A673 (cell line): ENCODE measurements at regions of chr10 and their contacts with region 1.

Region 1: DNA sequence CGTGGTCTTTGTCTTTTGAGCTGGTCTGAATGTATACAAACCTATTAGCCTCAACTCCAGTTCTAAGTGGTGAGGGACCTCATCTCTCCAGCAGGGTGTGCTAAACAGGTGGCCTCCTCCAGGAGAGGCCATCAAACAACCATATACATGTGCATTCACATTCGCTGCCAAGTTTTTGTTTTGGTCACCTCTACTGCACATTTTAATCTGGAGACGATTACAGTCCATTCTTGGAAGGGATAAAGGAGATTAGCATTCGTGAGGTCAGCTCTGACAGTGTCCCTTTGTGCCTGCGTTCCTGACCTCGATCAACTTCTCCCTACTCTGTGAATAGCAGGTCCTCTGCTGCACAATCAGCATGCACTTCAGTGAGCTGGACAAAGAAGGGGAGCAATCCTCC is 60.8 kb downstream of the RHOBTB1 start:
- DNase-seq: peak; percentile 42
- H3K4me3 ChIP-seq: no peak overlapping the region
- H3K27ac ChIP-seq: no peak overlapping the region
- H3K4me1 ChIP-seq: no peaks in the 10 kb centered on the region
- H3K27me3 ChIP-seq: no peaks in the 10 kb centered on the region
- CTCF ChIP-seq: peak; percentile 52

Region 2: DNA sequence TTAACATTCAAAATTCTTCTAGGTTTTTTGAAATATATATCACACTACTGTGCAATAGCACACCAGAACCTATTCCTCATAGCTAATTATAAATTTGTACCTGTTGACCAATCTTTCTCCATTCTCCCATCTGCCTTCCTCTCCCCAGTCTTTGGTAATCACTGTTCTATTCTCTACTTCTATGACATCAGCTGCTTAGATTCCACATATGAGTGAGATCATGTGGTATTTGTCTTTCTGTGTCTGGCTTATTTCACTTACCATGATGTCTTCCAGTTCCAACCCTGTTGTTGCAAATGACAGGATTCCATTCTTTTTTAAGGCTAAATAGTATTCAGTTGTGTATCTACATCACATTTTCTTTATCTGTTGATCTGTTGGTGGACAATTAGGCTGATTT is 922.4 kb before region 1 on chr10:
- CTCF ChIA-PET with region 1: no interaction called
- POLR2A ChIA-PET with region 1: no interaction called
- intact Hi-C with region 1: no loop called
- DNase-seq: no peak
- H3K4me3 ChIP-seq: no peak overlapping the region
- H3K27ac ChIP-seq: no peak overlapping the region
- H3K4me1 ChIP-seq: no peaks in the 10 kb centered on the region
- H3K27me3 ChIP-seq: no peaks in the 10 kb centered on the region
- CTCF ChIP-seq: no peak

Region 3: GRCh38 chr10:60910543-60910942 is 27.4 kb after region 1 on chr10:
- CTCF ChIA-PET with region 1: no interaction called
- POLR2A ChIA-PET with region 1: interaction called, 22 read pairs
- intact Hi-C with region 1: no loop called
- DNase-seq: no peak
- H3K4me3 ChIP-seq: no peak overlapping the region
- H3K27ac ChIP-seq: no peak overlapping the region
- H3K4me1 ChIP-seq: no peaks in the 10 kb centered on the region
- H3K27me3 ChIP-seq: no peaks in the 10 kb centered on the region
- CTCF ChIP-seq: no peak